Activated CD4-positive, alpha-beta T cell treated with anti-CD3 and anti-CD28 coated beads for 36 hours (primary cell): ENCODE measurements at regions of chr19 and their contacts with region 1.

Region 1: DNA sequence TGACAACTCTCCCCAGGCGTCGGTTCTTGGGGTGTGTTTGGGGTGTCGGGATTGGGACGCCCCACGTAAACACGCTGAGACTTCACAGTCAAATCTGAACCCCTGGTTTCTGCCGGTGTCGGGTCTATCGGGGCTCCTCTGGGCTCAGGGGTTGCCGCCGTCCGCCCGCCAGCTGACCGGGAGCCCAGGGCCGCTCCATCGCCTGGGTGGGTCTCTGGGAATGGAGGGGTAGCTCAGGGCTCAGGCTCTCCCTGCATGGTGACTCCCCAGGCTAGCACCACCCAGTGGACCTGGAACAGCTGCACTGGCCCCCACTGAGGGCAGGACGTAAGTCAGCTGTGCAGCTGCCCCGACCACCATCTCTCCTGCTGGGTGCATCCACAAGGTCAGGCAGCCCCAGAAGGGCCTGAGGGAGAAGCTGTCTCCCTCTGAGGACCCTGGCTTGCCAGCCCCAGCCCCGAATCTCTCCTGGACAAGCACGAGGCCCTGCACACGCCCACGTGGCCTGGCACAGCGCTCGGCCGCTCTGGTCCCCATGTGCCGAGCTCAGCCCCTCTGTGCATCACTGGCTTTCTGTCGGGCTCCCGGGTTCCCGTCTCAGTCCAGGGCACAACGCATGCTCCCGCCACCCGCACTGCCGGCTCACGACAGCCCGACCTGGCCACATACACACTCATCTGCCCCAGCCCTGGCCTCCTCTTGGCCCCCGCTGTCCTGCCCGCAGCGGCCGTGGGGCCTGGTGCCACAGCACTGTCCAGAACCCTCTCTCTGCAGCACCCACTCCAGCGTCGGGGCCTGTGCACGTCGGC is 6.1 kb downstream of the RNF126 start:
- DNase-seq: no peak
- ATAC-seq: no peak
- H3K4me3 Mint-ChIP-seq: no peak overlapping the region
- H3K27ac Mint-ChIP-seq: no peak overlapping the region
- H3K4me1 Mint-ChIP-seq: peaks cover 51% of the 10 kb centered on the region
- H3K27me3 Mint-ChIP-seq: no peaks in the 10 kb centered on the region

Region 2: DNA sequence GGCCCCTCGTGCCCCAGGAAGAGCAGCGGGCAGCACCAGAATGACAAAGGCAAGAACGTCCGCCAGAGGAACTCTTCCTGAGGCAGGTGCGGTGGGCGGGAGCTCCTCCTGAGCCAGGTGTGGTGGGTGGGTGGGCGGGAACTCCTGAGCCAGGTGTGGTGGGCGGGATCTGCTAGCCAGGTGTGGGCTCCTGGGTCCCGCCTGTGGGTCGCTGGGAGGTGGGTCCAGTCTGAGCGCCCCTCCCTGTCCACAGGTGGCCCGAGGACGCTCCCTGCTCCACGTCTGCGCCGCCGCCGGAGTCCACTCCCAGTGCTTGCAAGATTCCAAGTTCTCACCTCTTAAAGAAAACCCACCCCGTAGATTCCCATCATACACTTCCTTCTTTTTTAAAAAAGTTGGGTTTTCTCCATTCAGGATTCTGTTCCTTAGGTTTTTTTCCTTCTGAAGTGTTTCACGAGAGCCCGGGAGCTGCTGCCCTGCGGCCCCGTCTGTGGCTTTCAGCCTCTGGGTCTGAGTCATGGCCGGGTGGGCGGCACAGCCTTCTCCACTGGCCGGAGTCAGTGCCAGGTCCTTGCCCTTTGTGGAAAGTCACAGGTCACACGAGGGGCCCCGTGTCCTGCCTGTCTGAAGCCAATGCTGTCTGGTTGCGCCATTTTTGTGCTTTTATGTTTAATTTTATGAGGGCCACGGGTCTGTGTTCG is 74.3 kb before region 1 on chr19:
- CTCF ChIA-PET with region 1: no interaction called
- POLR2A ChIA-PET with region 1: no interaction called
- intact Hi-C with region 1: loop called in 1 of 2 experiments (anchors 2 kb)
- DNase-seq: no peak
- ATAC-seq: no peak
- H3K4me3 Mint-ChIP-seq: no peak overlapping the region
- H3K27ac Mint-ChIP-seq: no peak overlapping the region
- H3K4me1 Mint-ChIP-seq: peaks cover 2% of the 10 kb centered on the region
- H3K27me3 Mint-ChIP-seq: peaks cover 4% of the 10 kb centered on the region

Region 3: GRCh38 chr19:604355-604754 is 52.6 kb before region 1 on chr19:
- CTCF ChIA-PET with region 1: no interaction called
- POLR2A ChIA-PET with region 1: no interaction called
- intact Hi-C with region 1: no loop called
- DNase-seq: peak; percentile 82
- ATAC-seq: peak; percentile 87
- H3K4me3 Mint-ChIP-seq: no peak overlapping the region
- H3K27ac Mint-ChIP-seq: no peak overlapping the region
- H3K4me1 Mint-ChIP-seq: no peaks in the 10 kb centered on the region
- H3K27me3 Mint-ChIP-seq: no peaks in the 10 kb centered on the region

Region 4: DNA sequence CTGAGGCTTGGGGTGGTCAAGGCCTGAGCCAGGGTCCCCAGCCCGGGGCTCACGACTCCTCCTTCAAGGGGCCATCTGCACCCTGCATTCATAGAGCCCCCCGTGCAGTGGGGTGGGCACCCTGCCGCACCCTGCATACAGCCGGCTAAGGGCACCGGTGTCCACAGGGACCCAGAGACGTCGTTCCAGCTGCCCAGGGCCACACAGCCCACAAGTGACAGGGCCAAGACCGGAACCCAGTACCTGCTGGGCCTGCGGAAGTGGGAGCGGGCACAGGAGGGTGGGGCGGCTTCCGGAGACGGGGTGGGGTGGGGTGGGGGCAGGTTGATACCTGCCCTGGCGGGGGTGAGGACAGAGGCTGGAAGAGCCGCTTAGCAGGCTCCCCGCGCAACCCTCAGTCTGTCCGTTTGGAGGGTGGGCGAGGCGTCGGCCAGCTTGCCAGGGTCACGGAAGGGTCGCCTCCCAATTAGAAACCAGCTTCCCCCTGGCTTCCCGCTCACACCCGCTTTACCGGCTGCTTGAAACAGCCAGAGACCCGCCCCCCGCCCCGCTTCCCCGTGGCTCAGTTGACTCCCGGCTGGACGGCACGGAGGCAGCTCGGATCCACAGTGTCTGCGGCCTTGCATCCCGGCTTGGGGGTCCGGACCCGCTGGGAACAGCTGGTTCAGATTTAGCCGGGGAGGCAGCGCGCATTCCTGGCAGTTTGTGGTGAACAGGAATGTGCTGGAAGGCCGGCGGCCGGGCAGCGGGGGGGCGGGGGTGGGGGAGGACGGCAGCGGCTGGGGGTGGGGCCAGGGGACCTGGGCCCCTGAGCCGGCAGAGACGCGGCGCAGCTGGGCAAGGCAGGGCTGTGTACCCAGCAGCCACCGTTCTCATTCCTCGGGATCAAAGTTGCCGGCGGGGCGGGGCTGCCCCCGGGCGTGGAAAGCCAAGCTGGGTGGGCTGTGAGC is 371.3 kb after region 1 on chr19:
- CTCF ChIA-PET with region 1: no interaction called
- POLR2A ChIA-PET with region 1: no interaction called
- intact Hi-C with region 1: no loop called
- DNase-seq: peak; percentile 76
- ATAC-seq: peak; percentile 55
- H3K4me3 Mint-ChIP-seq: peak overlapping the region; percentile 88
- H3K27ac Mint-ChIP-seq: peak overlapping the region; percentile 74
- H3K4me1 Mint-ChIP-seq: peaks cover 29% of the 10 kb centered on the region
- H3K27me3 Mint-ChIP-seq: no peaks in the 10 kb centered on the region

Region 5: GRCh38 chr19:1103708-1104310 is 446.9 kb after region 1 on chr19 and contains the start of gene GPX4:
- CTCF ChIA-PET with region 1: no interaction called
- POLR2A ChIA-PET with region 1: no interaction called
- intact Hi-C with region 1: no loop called
- DNase-seq: peak; percentile 100
- ATAC-seq: peak; percentile 81
- H3K4me3 Mint-ChIP-seq: peak within 1 kb of the TSS; percentile 71
- H3K27ac Mint-ChIP-seq: peak within 1 kb of the TSS; percentile 83
- H3K4me1 Mint-ChIP-seq: peaks cover 52% of the 10 kb centered on the region
- H3K27me3 Mint-ChIP-seq: no peaks in the 10 kb centered on the region
- total RNA-seq, gene GPX4: 192 to 218 TPM